Posterior cingulate gyrus (tissue), 11 donors: ENCODE measurements at regions of chr11 and their contacts with region 1.

Region 1: GRCh38 chr11:62169935-62170548 is 20.0 kb upstream of the SCGB1D1 start:
- DNase-seq: no peak

Region 2: DNA sequence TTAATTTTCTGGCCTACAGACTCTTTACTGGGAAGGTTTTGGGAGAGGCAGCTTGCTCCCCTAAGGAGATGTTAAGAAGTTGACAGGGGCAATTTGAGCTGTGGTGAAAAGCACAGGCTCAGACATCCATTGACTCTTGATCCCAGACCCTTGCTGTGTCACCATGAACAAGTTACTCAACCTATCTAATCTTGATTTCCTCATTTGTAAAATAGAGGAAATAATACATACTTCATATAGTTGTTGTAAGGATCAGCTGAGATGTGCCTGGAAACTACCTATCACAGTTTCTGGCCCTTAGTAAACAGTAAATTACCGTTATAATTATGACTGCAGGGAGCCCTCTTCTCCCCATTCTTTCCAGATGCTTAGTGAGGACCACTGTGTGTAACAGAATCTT is 145.4 kb after region 1 on chr11:
- intact Hi-C with region 1: loop called (anchors 1 kb)
- DNase-seq: no peak

Region 3: GRCh38 chr11:62372871-62373270 is 202.8 kb after region 1 on chr11:
- intact Hi-C with region 1: loop called (anchors 2 kb)
- DNase-seq: peak in 1 of 10 donors; percentile 38